ENCODE measurements at regions of chr12 and their contacts with region 1.

Region 1: GRCh38 chr12:120580787-120581723 is at the start of gene POP5:
- DNase-seq: peak; percentile 98 to 99
- H3K4me3 ChIP-seq: peak within 1 kb of the TSS; percentile 86
- H3K4me1 ChIP-seq: peaks cover 15% of the 10 kb centered on the region
- H3K27me3 ChIP-seq: no peaks in the 10 kb centered on the region

Region 2: GRCh38 chr12:119938049-119938667 is 642.9 kb before region 1 on chr12:
- in situ Hi-C with region 1: no loop called
- DNase-seq: peak; percentile 56 to 78
- H3K4me3 ChIP-seq: no peak overlapping the region
- H3K4me1 ChIP-seq: peaks cover 7% of the 10 kb centered on the region; the same call in 1 of the 2 replicates
- H3K27me3 ChIP-seq: no peaks in the 10 kb centered on the region

Region 3: GRCh38 chr12:120352117-120352516 is 228.9 kb before region 1 on chr12:
- in situ Hi-C with region 1: no loop called
- DNase-seq: no peak
- H3K4me3 ChIP-seq: no peak overlapping the region
- H3K4me1 ChIP-seq: no peaks in the 10 kb centered on the region
- H3K27me3 ChIP-seq: no peaks in the 10 kb centered on the region

Region 4: GRCh38 chr12:120710031-120710804 is 129.2 kb after region 1 on chr12 and contains the start of gene UNC119B:
- in situ Hi-C with region 1: loop called (anchors 5 kb)
- DNase-seq: peak; percentile 39 to 82
- H3K4me3 ChIP-seq: peak within 1 kb of the TSS; percentile 71
- H3K4me1 ChIP-seq: peaks cover 9% of the 10 kb centered on the region
- H3K27me3 ChIP-seq: no peaks in the 10 kb centered on the region

Region 5: GRCh38 chr12:120961604-120962531 is 380.8 kb after region 1 on chr12:
- in situ Hi-C with region 1: loop called (anchors 10 kb)
- DNase-seq: peak in 1 of 2 experiments; percentile 35
- H3K4me3 ChIP-seq: no peak overlapping the region
- H3K4me1 ChIP-seq: peaks cover 2% of the 10 kb centered on the region; the same call in 1 of the 2 replicates
- H3K27me3 ChIP-seq: no peaks in the 10 kb centered on the region

Region 6: GRCh38 chr12:121110211-121110940 is 529.3 kb after region 1 on chr12:
- in situ Hi-C with region 1: loop called (anchors 10 kb)
- DNase-seq: peak; percentile 69 to 72
- H3K4me3 ChIP-seq: no peak overlapping the region
- H3K4me1 ChIP-seq: no peaks in the 10 kb centered on the region
- H3K27me3 ChIP-seq: no peaks in the 10 kb centered on the region